Activated CD4-positive, alpha-beta memory T cell treated with anti-CD3 and anti-CD28 coated beads for 36 hours (primary cell): ENCODE measurements at regions of chr17 and their contacts with region 1.

Region 1: GRCh38 chr17:29568331-29569244 is at the start of gene TP53I13:
- DNase-seq: peak; percentile 93
- H3K4me3 Mint-ChIP-seq: peak within 1 kb of the TSS; percentile 86
- H3K27ac Mint-ChIP-seq: peak within 1 kb of the TSS; percentile 94
- H3K4me1 Mint-ChIP-seq: peaks cover 38% of the 10 kb centered on the region
- H3K27me3 Mint-ChIP-seq: no peaks in the 10 kb centered on the region
- total RNA-seq, gene TP53I13: 54.2 to 55.3 TPM

Region 2: GRCh38 chr17:29475891-29476290 is 92.7 kb before region 1 on chr17:
- CTCF ChIA-PET with region 1: no interaction called
- POLR2A ChIA-PET with region 1: no interaction called
- intact Hi-C with region 1: no loop called
- DNase-seq: no peak
- H3K4me3 Mint-ChIP-seq: no peak overlapping the region
- H3K27ac Mint-ChIP-seq: no peak overlapping the region
- H3K4me1 Mint-ChIP-seq: no peaks in the 10 kb centered on the region
- H3K27me3 Mint-ChIP-seq: no peaks in the 10 kb centered on the region

Region 3: GRCh38 chr17:29557085-29557697 is 11.4 kb before region 1 on chr17:
- CTCF ChIA-PET with region 1: interaction called, 4 read pairs
- POLR2A ChIA-PET with region 1: no interaction called
- intact Hi-C with region 1: loop called (anchors 1 kb)
- DNase-seq: no peak
- H3K4me3 Mint-ChIP-seq: no peak overlapping the region
- H3K27ac Mint-ChIP-seq: no peak overlapping the region
- H3K4me1 Mint-ChIP-seq: peaks cover 18% of the 10 kb centered on the region
- H3K27me3 Mint-ChIP-seq: no peaks in the 10 kb centered on the region

Region 4: GRCh38 chr17:29579866-29580771 is 11.5 kb after region 1 on chr17:
- CTCF ChIA-PET with region 1: interaction called, 7 read pairs
- POLR2A ChIA-PET with region 1: interaction called, 21 read pairs
- intact Hi-C with region 1: loop called (anchors 1 kb)
- DNase-seq: peak; percentile 94
- H3K4me3 Mint-ChIP-seq: no peak overlapping the region
- H3K27ac Mint-ChIP-seq: peak overlapping the region; percentile 47
- H3K4me1 Mint-ChIP-seq: peaks cover 12% of the 10 kb centered on the region
- H3K27me3 Mint-ChIP-seq: no peaks in the 10 kb centered on the region

Region 5: DNA sequence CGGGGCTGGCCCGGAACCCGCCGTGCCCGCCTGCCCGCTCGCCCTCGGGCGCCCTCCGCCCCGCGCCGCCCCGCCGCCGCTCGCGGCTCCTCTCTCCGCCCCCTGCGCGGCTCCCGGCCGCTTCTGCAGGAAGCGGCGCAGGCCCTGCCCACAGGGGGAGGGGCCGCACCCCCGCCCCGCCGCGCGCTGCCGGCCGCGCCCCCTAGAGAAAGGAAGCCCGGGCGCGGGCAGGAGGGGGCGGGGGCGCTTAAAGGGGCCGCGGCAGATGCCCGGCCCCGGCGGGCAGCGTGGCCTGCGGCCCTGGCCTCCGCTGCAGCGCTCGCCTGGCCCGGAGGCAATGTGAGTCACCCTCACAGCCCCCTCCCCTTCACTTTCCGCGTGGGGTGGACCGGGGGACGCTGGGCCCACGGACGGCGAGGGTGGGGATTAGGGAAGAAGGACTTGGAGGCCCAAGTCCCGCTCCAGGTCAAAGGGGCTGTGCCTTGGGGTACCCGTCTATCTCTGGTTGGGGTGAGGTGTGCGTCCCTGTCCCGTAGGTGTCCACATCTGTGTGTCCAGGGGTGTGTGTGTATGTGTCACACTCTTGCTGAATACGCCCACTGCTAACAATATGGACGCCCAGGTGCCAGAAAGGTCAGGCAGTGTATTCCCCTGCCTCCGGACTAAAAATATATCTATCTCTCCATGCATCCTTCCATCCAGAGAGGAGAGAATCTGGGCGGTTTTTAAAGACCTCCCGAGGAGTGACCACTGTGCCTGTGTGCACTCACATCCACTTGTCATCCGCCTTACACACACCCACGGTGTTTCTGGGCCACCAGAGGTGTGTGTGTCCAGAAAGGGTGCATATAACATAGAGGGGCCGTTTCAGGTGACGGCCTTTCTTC is 21.2 kb after region 1 on chr17 and contains the start of gene GIT1:
- CTCF ChIA-PET with region 1: interaction called, 52 read pairs
- POLR2A ChIA-PET with region 1: interaction called, 21 read pairs
- intact Hi-C with region 1: loop called (anchors 1 kb)
- DNase-seq: peak; percentile 88
- H3K4me3 Mint-ChIP-seq: peak within 1 kb of the TSS; percentile 94
- H3K27ac Mint-ChIP-seq: peak within 1 kb of the TSS; percentile 90
- H3K4me1 Mint-ChIP-seq: peaks cover 74% of the 10 kb centered on the region
- H3K27me3 Mint-ChIP-seq: no peaks in the 10 kb centered on the region
- total RNA-seq, gene GIT1: 51.3 to 54.4 TPM

Region 6: DNA sequence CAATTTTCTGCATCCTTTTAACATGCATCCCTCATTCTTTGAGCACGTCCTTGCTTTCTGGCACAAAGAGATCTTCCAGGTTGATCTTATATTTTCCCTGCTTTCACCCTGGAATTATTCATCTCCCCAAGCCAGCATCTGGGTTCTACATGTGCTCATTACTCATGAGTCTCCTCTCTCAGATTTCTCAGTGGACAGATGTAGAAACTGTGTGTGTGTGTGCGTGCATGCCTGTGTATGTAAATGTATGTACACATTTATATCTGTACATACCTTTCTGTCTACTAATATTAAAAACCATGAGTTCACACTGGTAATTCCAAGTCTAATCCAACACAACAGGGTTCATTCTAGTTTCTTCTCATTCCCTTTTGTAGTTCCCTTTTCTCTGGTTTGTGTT is 506.1 kb after region 1 on chr17:
- CTCF ChIA-PET with region 1: no interaction called
- POLR2A ChIA-PET with region 1: no interaction called
- intact Hi-C with region 1: no loop called
- DNase-seq: no peak
- H3K4me3 Mint-ChIP-seq: no peak overlapping the region
- H3K27ac Mint-ChIP-seq: no peak overlapping the region
- H3K4me1 Mint-ChIP-seq: no peaks in the 10 kb centered on the region
- H3K27me3 Mint-ChIP-seq: peaks cover 8% of the 10 kb centered on the region